Activated CD4-positive, alpha-beta T cell treated with anti-CD3 and anti-CD28 coated beads, Interleukin-2, amount 10 ng/mL, durations not matched to agents 7 days and 5 days (primary cell): ENCODE measurements at regions of chr2 and their contacts with region 1.

Region 1: DNA sequence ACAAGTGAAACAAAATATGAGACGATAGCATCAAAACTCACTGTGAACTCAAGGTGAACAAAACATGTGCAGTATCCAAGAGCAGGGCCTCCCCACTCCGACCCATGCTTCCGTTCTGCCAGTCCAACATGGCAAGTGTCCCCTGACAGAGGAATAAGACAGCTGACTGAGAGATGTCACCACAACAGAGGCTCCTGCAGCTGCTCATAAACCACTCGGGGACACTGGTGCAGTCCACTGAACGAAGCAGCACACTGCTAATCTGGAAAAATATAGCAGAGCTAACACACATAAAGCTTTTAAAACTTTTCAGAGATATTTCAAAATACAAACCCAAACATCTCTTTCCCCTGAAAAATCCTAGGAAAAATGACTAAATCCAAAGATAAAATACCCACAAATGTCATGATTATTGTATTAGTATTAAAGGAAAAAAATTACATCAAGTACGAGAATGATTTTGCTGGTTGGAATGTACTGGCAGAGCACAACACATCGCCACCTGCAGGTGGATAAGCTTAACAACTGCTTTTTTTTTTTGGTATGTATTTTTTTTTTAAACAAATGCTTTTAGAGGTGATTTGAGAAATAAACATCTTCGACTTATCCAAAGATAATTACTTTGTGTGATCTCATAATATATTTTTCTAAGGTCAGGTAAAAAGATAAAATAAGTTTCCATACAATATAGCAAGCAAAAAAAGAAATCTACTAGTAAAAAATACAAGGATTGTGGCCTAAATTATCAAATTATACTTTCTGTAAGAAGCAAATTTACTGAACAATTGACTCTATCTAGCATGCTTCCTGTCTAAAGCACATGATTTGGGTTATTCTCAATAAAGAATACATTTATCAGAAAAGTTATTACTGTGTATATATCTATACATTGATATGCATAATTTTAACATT is 18.6 kb downstream of the THADA start:
- DNase-seq: peak; percentile 37
- H3K4me3 Mint-ChIP-seq: no peak overlapping the region
- H3K27ac Mint-ChIP-seq: no peak overlapping the region
- H3K4me1 Mint-ChIP-seq: peaks cover 15% of the 10 kb centered on the region
- H3K27me3 Mint-ChIP-seq: no peaks in the 10 kb centered on the region

Region 2: DNA sequence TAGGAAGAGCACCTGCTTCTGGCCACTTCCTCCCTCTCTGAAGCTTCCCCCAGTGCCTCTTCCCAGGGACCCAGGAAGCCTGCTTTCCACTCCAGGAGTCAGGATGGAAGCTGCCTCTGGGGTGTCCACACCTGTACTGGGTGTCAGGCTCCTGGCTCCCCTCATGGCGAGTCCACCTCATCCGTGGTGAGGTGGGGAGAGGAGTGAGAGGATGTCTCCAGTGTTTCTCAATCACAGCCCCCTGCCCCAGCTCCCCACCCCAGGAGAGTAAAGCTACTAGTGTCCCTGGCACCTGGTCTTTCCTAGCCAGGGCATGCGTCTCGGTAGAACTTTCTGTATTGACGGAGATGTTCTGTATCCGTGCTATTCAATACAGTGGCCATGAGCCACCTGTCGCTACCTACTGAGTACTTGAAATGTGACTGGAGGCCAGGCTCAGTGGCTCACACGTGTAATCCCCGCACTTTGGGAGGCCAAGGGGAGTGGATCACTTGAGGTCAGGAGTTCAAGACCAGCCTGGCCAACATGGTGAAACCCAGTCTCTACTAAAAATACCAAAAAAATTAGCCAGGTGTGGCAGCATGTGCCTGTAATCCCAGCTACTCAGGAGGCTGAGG is 613.7 kb before region 1 on chr2:
- CTCF ChIA-PET with region 1: interaction called, 3 read pairs
- POLR2A ChIA-PET with region 1: interaction called, 11 read pairs
- DNase-seq: no peak
- H3K4me3 Mint-ChIP-seq: no peak overlapping the region
- H3K27ac Mint-ChIP-seq: no peak overlapping the region
- H3K4me1 Mint-ChIP-seq: peaks cover 11% of the 10 kb centered on the region
- H3K27me3 Mint-ChIP-seq: peaks cover 10% of the 10 kb centered on the region

Region 3: DNA sequence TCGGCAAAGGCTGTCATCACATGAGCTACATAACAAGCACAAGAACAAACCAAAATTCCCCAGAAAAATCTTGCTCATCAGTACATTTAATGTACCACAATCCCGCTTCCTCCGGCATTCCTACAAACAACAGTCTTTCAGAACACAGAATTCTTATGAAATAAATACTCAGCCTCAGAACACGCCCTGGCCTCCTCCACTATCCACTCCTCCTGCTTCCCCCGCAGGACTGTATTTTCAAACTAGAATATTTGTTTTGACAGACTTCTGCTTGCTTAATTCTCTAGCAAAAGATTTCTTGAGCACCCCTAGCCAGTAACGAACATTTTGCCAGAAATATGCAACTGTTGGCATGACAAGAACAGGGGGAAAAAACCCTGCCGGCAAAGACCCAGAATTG is 112.6 kb before region 1 on chr2:
- CTCF ChIA-PET with region 1: no interaction called
- POLR2A ChIA-PET with region 1: no interaction called
- DNase-seq: no peak
- H3K4me3 Mint-ChIP-seq: no peak overlapping the region
- H3K27ac Mint-ChIP-seq: no peak overlapping the region
- H3K4me1 Mint-ChIP-seq: peaks cover 20% of the 10 kb centered on the region
- H3K27me3 Mint-ChIP-seq: no peaks in the 10 kb centered on the region

Region 4: DNA sequence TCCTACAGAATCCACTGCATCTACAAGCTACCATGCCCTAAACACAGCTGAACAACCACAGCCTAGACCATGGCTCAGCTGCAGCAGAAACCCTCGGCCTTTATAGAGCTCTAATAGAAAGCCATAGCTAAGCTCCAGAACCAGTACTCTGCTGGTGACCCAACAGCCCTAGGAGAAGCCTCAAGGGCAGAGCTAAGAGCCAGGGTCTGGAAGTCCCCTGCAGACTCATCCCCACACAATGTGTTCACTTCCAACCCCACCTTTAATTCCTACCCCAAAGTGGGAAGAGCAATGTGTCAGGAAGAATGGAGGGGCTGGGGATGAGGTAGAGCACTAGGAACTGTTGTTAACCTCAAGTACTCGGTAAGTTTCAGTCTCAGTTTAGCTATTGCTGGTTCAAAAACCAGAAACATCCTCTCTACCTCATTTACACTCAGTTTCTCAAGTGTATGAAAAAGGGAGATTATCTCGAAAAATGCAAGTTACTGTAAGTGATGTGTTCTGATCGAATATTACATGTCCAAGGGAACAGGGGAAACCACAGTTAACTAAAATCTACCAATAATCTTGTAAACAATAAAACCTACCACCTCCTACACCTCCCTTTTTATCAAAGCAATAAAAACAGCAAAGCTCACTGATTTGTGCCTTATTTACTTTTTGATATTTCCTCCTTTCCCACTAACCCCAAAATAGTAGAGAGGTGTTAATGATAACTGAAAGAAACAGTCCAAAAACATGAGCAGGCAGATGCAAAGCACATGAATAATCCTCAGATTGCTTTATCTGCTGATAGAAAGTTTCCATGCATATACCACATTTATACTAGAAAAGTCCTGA is 17.6 kb before region 1 on chr2:
- CTCF ChIA-PET with region 1: interaction called, 15 read pairs
- POLR2A ChIA-PET with region 1: no interaction called
- DNase-seq: no peak
- H3K4me3 Mint-ChIP-seq: no peak overlapping the region
- H3K27ac Mint-ChIP-seq: peak overlapping the region; percentile 82
- H3K4me1 Mint-ChIP-seq: peaks cover 44% of the 10 kb centered on the region
- H3K27me3 Mint-ChIP-seq: no peaks in the 10 kb centered on the region

Region 5: DNA sequence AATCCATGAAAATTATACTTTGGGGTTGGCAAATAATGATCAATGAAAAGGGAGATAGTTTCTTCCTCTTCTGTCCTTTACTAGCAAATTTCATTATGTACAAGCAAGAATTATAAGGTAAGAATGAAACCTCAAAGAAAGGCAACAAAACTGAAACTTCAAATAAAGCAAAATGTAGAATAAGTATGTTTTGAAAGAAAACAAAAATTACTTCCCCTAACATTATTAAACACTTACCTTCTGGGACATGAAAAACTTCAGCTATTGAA is 10.8 kb before region 1 on chr2:
- CTCF ChIA-PET with region 1: interaction called, 15 read pairs
- POLR2A ChIA-PET with region 1: no interaction called
- DNase-seq: no peak
- H3K4me3 Mint-ChIP-seq: no peak overlapping the region
- H3K27ac Mint-ChIP-seq: no peak overlapping the region
- H3K4me1 Mint-ChIP-seq: peaks cover 53% of the 10 kb centered on the region
- H3K27me3 Mint-ChIP-seq: no peaks in the 10 kb centered on the region